Caco-2 (cell line): ENCODE measurements at regions of chr7 and their contacts with region 1.

Region 1: DNA sequence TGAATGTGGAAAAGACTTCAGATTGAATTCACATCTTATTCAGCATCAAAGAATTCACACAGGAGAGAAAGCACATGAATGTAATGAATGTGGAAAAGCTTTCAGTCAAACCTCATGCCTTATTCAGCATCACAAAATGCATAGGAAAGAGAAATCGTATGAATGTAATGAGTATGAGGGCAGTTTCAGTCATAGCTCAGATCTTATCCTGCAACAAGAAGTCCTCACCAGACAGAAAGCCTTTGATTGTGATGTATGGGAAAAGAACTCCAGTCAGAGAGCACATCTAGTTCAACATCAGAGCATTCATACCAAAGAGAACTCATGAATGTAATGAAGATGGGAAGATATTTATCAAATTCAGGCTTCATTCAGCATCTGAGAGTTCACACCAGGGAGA is 14.8 kb downstream of the ZNF655 start:
- DNase-seq: no peak
- H3K4me3 ChIP-seq: no peak overlapping the region
- H3K4me3 Mint-ChIP-seq: no peak overlapping the region
- H3K27ac Mint-ChIP-seq: no peak overlapping the region
- H3K4me1 ChIP-seq: no peaks in the 10 kb centered on the region
- H3K4me1 Mint-ChIP-seq: no peaks in the 10 kb centered on the region
- H3K27me3 ChIP-seq: no peaks in the 10 kb centered on the region
- H3K27me3 Mint-ChIP-seq: peaks cover 7% of the 10 kb centered on the region
- CTCF ChIP-seq: no peak

Region 2: DNA sequence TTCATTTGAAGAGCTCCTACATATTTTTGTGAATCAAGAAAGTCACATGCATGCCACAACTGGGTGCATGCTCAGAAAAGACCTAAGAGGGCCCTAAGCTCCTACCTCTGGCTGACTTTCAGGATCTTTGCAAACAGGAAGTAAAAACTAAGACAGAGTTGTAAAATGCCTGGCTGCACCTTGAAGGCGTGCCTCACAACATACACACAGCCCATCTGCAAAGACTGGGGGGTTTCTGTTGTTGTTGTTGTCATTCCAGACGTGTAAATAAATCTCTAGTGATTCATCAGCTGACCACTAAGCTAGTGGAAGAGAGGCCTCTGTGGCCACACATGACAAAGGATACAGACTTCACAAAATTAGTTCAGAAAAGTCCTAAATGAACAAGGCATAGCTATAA is 461.2 kb before region 1 on chr7:
- CTCF ChIA-PET with region 1: no interaction called
- POLR2A ChIA-PET with region 1: no interaction called
- intact Hi-C with region 1: no loop called
- DNase-seq: no peak
- H3K4me3 ChIP-seq: no peak overlapping the region
- H3K4me3 Mint-ChIP-seq: no peak overlapping the region
- H3K27ac Mint-ChIP-seq: no peak overlapping the region
- H3K4me1 ChIP-seq: peaks cover 39% of the 10 kb centered on the region
- H3K4me1 Mint-ChIP-seq: peaks cover 29% of the 10 kb centered on the region
- H3K27me3 ChIP-seq: no peaks in the 10 kb centered on the region
- H3K27me3 Mint-ChIP-seq: no peaks in the 10 kb centered on the region
- CTCF ChIP-seq: no peak

Region 3: DNA sequence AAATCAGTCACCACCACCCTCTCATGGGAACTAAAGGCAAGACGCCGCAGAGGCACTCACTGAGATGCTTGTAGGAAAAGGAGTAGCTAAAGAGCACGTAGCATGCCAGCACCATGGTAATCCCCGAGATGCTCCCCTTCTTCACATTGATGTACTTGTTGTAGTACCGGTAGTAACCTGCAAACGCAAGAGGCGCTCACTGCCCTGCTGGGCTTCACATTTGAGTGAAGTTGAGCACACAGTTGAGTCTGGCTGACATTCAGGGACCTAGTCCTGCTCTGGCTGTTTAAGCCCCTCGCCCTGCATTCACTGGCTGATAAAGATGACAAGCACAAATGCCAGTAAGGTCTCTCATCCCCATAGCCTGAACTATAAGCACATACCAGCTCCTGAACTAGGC is 114.2 kb before region 1 on chr7:
- CTCF ChIA-PET with region 1: no interaction called
- POLR2A ChIA-PET with region 1: no interaction called
- intact Hi-C with region 1: no loop called
- DNase-seq: peak; percentile 49 to 59
- H3K4me3 ChIP-seq: no peak overlapping the region
- H3K4me3 Mint-ChIP-seq: no peak overlapping the region
- H3K27ac Mint-ChIP-seq: peak overlapping the region; percentile 51
- H3K4me1 ChIP-seq: no peaks in the 10 kb centered on the region
- H3K4me1 Mint-ChIP-seq: peaks cover 16% of the 10 kb centered on the region
- H3K27me3 ChIP-seq: no peaks in the 10 kb centered on the region
- H3K27me3 Mint-ChIP-seq: no peaks in the 10 kb centered on the region
- CTCF ChIP-seq: peak; percentile 37 to 43

Region 4: DNA sequence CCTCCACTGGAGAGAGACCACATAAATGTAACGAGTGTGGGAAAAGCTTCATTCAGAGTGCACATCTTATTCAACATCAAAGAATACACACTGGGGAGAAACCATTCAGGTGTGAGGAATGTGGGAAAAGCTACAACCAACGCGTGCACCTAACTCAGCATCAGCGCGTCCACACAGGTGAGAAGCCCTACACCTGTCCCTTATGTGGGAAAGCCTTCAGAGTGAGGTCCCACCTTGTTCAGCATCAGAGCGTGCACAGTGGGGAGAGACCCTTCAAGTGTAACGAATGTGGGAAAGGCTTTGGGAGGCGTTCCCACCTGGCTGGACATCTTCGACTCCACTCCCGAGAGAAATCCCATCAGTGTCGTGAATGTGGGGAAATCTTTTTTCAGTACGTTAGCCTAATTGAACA is 41.9 kb before region 1 on chr7:
- CTCF ChIA-PET with region 1: no interaction called
- POLR2A ChIA-PET with region 1: interaction called, 13 read pairs
- intact Hi-C with region 1: no loop called
- DNase-seq: no peak
- H3K4me3 ChIP-seq: no peak overlapping the region
- H3K4me3 Mint-ChIP-seq: no peak overlapping the region
- H3K27ac Mint-ChIP-seq: no peak overlapping the region
- H3K4me1 ChIP-seq: no peaks in the 10 kb centered on the region
- H3K4me1 Mint-ChIP-seq: no peaks in the 10 kb centered on the region
- H3K27me3 ChIP-seq: no peaks in the 10 kb centered on the region
- H3K27me3 Mint-ChIP-seq: no peaks in the 10 kb centered on the region
- CTCF ChIP-seq: no peak